RWPE1 (cell line): ENCODE measurements at regions of chr5 and their contacts with region 1.

Region 1: GRCh38 chr5:180328296-180329137 is 24.6 kb downstream of the GFPT2 start:
- DNase-seq: peak; percentile 76
- H3K27ac ChIP-seq: no peak overlapping the region
- CTCF ChIP-seq: peak; percentile 91

Region 2: GRCh38 chr5:179648410-179648809 is 680.1 kb before region 1 on chr5:
- CTCF ChIA-PET with region 1: no interaction called
- POLR2A ChIA-PET with region 1: no interaction called
- DNase-seq: no peak
- H3K27ac ChIP-seq: no peak overlapping the region
- CTCF ChIP-seq: no peak

Region 3: DNA sequence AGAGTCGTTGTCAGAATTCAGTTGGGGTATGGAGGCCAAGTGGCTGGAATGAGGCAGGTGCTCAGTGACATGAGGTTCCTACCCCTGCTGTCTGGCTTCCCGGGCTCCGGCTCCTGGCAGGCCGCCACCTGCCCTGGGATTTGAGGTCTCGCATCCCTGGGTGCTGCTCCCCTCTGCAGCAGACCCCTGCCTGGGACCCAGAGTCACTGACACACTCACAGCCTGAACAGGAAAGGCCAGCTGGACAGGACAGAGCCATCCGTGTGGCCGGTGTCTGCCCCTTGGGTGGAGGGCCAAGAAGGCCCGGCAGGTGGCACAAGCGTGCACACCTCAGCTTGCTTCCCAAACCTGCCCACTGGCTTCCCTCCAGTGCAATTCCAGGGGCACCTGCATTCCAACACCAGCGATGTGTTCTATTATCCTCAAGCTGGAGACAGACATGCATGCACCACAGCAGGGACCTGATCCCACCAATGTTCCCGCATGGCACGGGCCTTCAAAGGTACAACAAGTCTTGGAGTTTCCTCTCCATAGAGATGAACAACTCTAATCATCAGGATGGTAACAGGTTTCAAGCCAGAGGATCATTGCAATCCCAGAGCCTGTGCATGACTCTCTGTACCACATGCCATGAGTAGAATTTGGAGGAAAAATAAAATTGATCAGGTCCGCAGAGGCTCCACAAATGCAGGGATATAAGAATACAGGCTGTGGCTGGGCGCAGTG is 211.4 kb before region 1 on chr5:
- CTCF ChIA-PET with region 1: interaction called, 10 read pairs
- POLR2A ChIA-PET with region 1: no interaction called
- DNase-seq: peak; percentile 72
- H3K27ac ChIP-seq: no peak overlapping the region
- CTCF ChIP-seq: peak; percentile 54

Region 4: GRCh38 chr5:180343831-180344327 is 15.4 kb after region 1 on chr5:
- CTCF ChIA-PET with region 1: interaction called, 12 read pairs
- POLR2A ChIA-PET with region 1: interaction called, 5 read pairs
- DNase-seq: peak; percentile 55
- H3K27ac ChIP-seq: no peak overlapping the region
- CTCF ChIP-seq: no peak

Region 5: GRCh38 chr5:180860887-180861822 is 532.6 kb after region 1 on chr5 and contains the start of gene ZFP62:
- CTCF ChIA-PET with region 1: no interaction called
- POLR2A ChIA-PET with region 1: no interaction called
- DNase-seq: peak; percentile 94
- H3K27ac ChIP-seq: peak within 1 kb of the TSS; percentile 95
- CTCF ChIP-seq: peak; percentile 23; the same call in 1 of the 2 replicates